AG04450 (cell line): ENCODE measurements at regions of chr15 and their contacts with region 1.

Region 1: DNA sequence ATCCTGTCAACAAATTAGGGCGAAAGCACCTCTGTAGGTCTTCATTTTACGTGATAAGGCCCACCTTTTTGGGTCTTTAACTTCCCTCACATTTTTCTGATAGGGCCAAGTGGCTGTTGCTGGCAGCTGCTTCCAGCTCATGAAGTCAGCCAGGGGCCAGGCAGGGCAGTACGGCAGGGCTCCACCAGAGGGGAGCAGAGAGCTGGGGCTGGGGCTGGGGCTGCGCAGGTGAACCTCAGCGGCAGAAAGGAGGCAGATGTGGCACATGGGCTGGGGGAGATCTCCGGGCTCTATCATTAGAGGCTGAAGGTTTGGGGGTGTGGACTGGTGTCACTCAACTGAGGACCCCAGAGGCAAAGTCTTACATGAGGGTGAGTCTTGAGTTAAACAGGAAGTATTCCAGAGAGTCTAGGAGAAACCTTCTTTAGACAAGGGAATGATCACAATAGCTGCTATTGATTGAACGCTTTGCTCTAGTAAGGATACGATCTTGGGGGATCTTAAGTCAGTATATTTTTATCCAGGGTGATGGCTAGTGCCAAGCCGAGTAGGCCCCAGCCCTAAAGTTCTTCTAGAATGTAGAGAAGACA is 62.8 kb upstream of the MEX3B start:
- DNase-seq: no peak
- H3K4me3 ChIP-seq: no peak overlapping the region
- H3K27ac ChIP-seq: no peak overlapping the region
- H3K27me3 ChIP-seq: no peaks in the 10 kb centered on the region
- CTCF ChIP-seq: peak; percentile 97

Region 2: GRCh38 chr15:81410318-81410753 is 698.2 kb before region 1 on chr15:
- CTCF ChIA-PET with region 1: interaction called, 24 read pairs
- POLR2A ChIA-PET with region 1: no interaction called
- DNase-seq: peak; percentile 37
- H3K4me3 ChIP-seq: no peak overlapping the region
- H3K27ac ChIP-seq: no peak overlapping the region
- H3K27me3 ChIP-seq: peaks cover 17% of the 10 kb centered on the region
- CTCF ChIP-seq: peak; percentile 57

Region 3: GRCh38 chr15:82091636-82092140 is 16.9 kb before region 1 on chr15:
- CTCF ChIA-PET with region 1: interaction called, 10 read pairs
- POLR2A ChIA-PET with region 1: interaction called, 3 read pairs
- DNase-seq: no peak
- H3K4me3 ChIP-seq: no peak overlapping the region
- H3K27ac ChIP-seq: no peak overlapping the region
- H3K27me3 ChIP-seq: no peaks in the 10 kb centered on the region
- CTCF ChIP-seq: no peak

Region 4: GRCh38 chr15:82129761-82130160 is 21.2 kb after region 1 on chr15:
- CTCF ChIA-PET with region 1: interaction called, 65 read pairs
- POLR2A ChIA-PET with region 1: interaction called, 8 read pairs
- DNase-seq: peak; percentile 82
- H3K4me3 ChIP-seq: peak overlapping the region; percentile 18; the same call in 1 of the 2 replicates
- H3K27ac ChIP-seq: peak overlapping the region; percentile 91
- H3K27me3 ChIP-seq: no peaks in the 10 kb centered on the region
- CTCF ChIP-seq: no peak

Region 5: GRCh38 chr15:82177291-82178010 is 68.9 kb after region 1 on chr15:
- CTCF ChIA-PET with region 1: interaction called, 13 read pairs
- POLR2A ChIA-PET with region 1: no interaction called
- DNase-seq: no peak
- H3K4me3 ChIP-seq: no peak overlapping the region
- H3K27ac ChIP-seq: no peak overlapping the region
- H3K27me3 ChIP-seq: no peaks in the 10 kb centered on the region
- CTCF ChIP-seq: no peak

Region 6: GRCh38 chr15:82197733-82198594 is 89.4 kb after region 1 on chr15:
- CTCF ChIA-PET with region 1: interaction called, 50 read pairs
- POLR2A ChIA-PET with region 1: no interaction called
- DNase-seq: peak; percentile 50
- H3K4me3 ChIP-seq: no peak overlapping the region
- H3K27ac ChIP-seq: no peak overlapping the region
- H3K27me3 ChIP-seq: no peaks in the 10 kb centered on the region
- CTCF ChIP-seq: peak; percentile 79

Region 7: DNA sequence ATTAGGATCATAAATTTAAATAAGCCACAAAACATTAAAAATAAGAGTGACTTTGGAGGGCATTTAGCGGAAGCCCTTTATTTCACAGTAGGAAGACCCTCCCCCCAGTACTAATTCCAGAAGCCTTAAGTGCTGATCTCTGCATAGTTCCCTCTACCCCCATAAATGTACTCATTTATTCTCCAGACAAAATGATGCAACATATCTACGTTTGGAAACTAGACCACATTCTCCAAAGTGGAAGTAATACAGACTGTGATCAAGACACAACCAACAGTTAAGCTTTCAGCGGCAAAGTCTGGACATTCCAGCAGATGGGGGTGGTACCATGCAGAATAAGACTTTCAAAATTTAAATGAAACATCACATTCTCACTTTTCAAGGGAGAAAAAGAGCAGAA is 476.5 kb after region 1 on chr15:
- CTCF ChIA-PET with region 1: no interaction called
- POLR2A ChIA-PET with region 1: no interaction called
- DNase-seq: no peak
- H3K4me3 ChIP-seq: no peak overlapping the region
- H3K27ac ChIP-seq: no peak overlapping the region
- H3K27me3 ChIP-seq: peaks cover 6% of the 10 kb centered on the region
- CTCF ChIP-seq: peak; percentile 17; the same call in 1 of the 2 replicates